ENCODE measurements at regions of chr6 and their contacts with region 1.

Region 1: DNA sequence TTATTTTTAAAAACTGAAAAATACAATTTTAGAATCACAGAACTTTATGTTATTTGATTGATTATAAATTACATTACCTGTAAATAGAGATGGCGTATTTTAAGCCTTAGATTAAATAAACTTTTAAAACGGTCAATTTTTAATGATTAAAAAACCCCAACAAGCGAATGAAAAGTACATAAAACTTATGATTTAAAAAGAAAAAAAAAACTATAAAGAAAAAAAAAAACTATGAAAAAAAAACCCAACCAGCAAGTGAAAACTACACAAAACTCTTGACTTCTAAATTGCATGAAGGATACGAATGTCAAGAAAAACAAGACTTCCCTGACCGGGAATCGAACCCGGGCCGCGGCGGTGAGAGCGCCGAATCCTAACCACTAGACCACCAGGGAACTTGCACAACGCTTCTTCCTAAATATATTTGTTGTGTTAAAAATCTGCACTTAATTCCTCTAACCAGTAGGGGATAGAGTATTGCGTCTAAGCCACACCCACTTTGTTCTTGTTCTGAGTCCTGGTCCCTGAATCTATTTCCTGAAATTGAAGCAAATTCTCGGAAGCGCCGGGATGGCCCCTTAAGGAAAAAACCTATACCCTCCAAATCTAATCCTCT is 10.7 kb upstream of the NCOA7 start:
- DNase-seq: peak; percentile 90
- H3K4me3 ChIP-seq: peak overlapping the region; percentile 57
- CTCF ChIP-seq: peak; percentile 14

Region 2: GRCh38 chr6:125829433-125829832 is 49.4 kb after region 1 on chr6:
- in situ Hi-C with region 1: no loop called
- DNase-seq: no peak
- H3K4me3 ChIP-seq: no peak overlapping the region
- CTCF ChIP-seq: no peak

Region 3: GRCh38 chr6:125956506-125957390 is 176.7 kb after region 1 on chr6 and contains the start of gene HINT3:
- in situ Hi-C with region 1: loop called (anchors 25 kb)
- DNase-seq: peak; percentile 94
- H3K4me3 ChIP-seq: peak within 1 kb of the TSS; percentile 75
- CTCF ChIP-seq: peak; percentile 97